AG04450 (cell line): ENCODE measurements at regions of chr17 and their contacts with region 1.

Region 1: DNA sequence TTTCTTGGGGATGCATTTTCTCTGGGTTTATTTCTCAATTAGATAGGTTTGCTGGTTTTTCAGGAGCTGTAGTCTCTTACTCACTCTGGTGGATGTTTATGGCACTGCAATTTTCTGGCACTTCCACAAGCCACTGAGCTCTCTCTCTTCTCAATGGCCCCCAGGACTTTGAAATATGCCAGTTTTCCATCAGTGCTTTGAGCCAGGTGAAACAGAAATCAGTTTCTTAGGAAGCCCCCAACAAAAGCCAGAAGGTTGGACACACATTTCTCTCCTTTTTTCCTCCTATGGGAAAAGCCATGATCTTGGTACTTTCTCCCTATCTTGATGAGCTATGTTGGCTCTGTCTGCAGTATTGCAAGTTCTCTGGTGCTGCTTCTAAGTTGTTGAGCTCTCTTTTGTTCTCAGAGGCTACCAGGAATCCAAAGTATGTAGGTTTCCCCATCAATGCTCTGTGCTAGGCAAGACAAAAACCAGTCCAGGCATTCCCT is 90.7 kb upstream of the SMIM36 start:
- DNase-seq: no peak
- H3K4me3 ChIP-seq: no peak overlapping the region
- H3K27ac ChIP-seq: no peak overlapping the region
- H3K27me3 ChIP-seq: no peaks in the 10 kb centered on the region
- CTCF ChIP-seq: peak; percentile 93

Region 2: GRCh38 chr17:54736573-54736972 is 865.3 kb before region 1 on chr17:
- CTCF ChIA-PET with region 1: no interaction called
- POLR2A ChIA-PET with region 1: no interaction called
- DNase-seq: no peak
- H3K4me3 ChIP-seq: no peak overlapping the region
- H3K27ac ChIP-seq: no peak overlapping the region
- H3K27me3 ChIP-seq: no peaks in the 10 kb centered on the region
- CTCF ChIP-seq: no peak

Region 3: GRCh38 chr17:55540414-55541091 is 61.4 kb before region 1 on chr17:
- CTCF ChIA-PET with region 1: interaction called, 568 read pairs
- POLR2A ChIA-PET with region 1: no interaction called
- DNase-seq: no peak
- H3K4me3 ChIP-seq: no peak overlapping the region
- H3K27ac ChIP-seq: no peak overlapping the region
- H3K27me3 ChIP-seq: no peaks in the 10 kb centered on the region
- CTCF ChIP-seq: no peak

Region 4: GRCh38 chr17:55576996-55577586 is 24.8 kb before region 1 on chr17:
- CTCF ChIA-PET with region 1: interaction called, 28 read pairs
- POLR2A ChIA-PET with region 1: no interaction called
- DNase-seq: no peak
- H3K4me3 ChIP-seq: peak overlapping the region; percentile 50
- H3K27ac ChIP-seq: peak overlapping the region; percentile 95
- H3K27me3 ChIP-seq: no peaks in the 10 kb centered on the region
- CTCF ChIP-seq: no peak

Region 5: DNA sequence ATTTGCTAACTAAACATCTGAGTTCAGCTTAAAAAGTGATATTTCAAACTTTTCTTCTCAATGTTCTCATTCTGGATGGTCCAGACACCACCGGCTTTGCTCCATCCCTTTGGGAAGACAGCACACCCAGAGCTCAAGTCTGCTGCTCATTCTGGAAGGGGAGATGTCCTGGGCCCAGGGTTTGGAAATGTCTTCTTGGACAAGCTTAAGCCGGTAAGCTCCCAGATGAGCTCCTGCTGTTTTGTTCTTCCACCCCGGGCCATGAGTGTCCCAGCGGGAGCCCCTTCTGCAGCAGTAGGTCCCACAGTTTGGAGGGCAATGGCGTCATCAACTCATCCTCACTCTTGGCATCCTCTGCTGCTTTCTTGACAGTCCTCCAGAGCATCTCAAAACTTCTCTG is 15.5 kb after region 1 on chr17:
- CTCF ChIA-PET with region 1: interaction called, 16 read pairs
- POLR2A ChIA-PET with region 1: no interaction called
- DNase-seq: no peak
- H3K4me3 ChIP-seq: no peak overlapping the region
- H3K27ac ChIP-seq: no peak overlapping the region
- H3K27me3 ChIP-seq: no peaks in the 10 kb centered on the region
- CTCF ChIP-seq: no peak

Region 6: DNA sequence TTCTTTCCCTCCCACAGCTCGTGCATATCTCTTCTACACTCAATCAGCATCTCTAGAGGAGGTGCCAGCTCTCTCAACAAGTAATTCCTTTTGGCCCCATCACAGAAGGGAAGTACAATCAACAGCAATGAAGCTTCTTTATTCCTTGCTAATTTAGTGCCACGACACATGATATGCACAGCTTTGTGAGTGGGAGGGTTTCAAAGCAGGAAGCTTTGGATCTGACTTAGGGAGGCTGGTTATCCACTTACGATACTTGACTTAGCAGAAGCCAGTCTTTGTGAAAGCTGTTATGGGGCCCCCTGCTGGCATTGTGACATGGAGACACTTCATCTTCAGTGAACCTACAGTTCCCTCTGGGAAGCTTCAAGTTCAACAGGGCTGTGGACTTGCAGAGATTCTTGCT is 39.8 kb after region 1 on chr17:
- CTCF ChIA-PET with region 1: interaction called, 67 read pairs
- POLR2A ChIA-PET with region 1: no interaction called
- DNase-seq: peak; percentile 48
- H3K4me3 ChIP-seq: no peak overlapping the region
- H3K27ac ChIP-seq: no peak overlapping the region
- H3K27me3 ChIP-seq: peaks cover 5% of the 10 kb centered on the region
- CTCF ChIP-seq: peak; percentile 80

Region 7: DNA sequence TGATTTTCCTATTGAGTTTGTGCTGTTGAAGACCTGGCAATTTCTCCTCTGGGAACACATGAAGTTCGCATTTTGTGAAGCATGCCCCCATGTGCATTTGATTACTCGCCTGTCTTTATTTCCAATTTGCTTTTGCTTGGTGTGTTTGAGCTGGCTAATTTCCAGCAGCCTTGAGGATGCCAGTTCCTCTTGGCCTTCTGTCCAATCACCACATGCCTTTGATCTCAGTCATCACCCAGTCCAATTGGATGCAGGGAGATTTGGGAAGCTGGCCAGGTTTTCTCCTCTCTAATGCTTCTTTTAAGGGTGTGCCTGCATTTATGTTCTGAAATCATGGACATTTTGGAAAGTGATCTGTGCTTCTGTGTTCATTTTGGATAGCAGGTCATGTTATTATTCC is 124.5 kb after region 1 on chr17:
- CTCF ChIA-PET with region 1: interaction called, 80 read pairs
- POLR2A ChIA-PET with region 1: no interaction called
- DNase-seq: peak; percentile 80
- H3K4me3 ChIP-seq: no peak overlapping the region
- H3K27ac ChIP-seq: no peak overlapping the region
- H3K27me3 ChIP-seq: no peaks in the 10 kb centered on the region
- CTCF ChIP-seq: no peak

Region 8: DNA sequence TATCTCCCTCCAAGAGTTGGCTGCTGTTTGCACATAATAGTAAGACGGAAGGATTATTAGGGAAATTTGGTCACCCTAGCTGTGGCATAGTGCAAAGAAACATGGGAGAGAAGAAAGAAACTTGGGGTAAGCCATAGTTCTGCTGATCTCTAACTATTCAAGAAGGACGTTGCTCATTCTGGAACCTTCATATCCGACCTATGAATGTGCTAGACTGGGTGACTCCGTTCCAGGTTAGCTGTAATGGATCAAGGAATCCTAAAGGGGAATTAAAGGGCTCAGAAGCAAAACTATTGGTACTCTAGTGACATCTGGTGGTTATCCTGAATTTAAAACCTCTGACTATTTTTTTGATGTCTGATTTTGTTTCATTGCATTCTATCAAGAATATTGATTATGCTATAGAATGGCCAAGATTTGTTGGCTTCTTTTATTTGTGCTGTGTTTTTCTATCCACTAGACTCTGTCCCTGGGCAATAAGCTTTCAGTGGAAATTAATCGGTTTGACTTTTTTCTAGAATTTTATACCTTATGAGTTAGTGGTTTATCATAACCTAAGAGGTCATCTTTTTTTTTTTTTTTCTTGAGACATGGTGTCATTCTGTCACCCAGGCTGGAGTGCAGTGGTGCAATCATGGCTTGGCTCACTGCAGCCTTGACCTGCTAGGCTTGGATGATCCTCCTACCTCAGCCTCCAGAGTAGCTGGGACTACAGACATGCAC is 168.4 kb after region 1 on chr17:
- CTCF ChIA-PET with region 1: interaction called, 73 read pairs
- POLR2A ChIA-PET with region 1: no interaction called
- DNase-seq: peak; percentile 29
- H3K4me3 ChIP-seq: no peak overlapping the region
- H3K27ac ChIP-seq: peak overlapping the region; percentile 78
- H3K27me3 ChIP-seq: no peaks in the 10 kb centered on the region
- CTCF ChIP-seq: peak; percentile 61